ENCODE measurements at regions of chr2 and their contacts with region 1.

Region 1: GRCh38 chr2:121530212-121530705 is 421 bp upstream of the RNU4ATAC start:
- DNase-seq: peak; percentile 90
- ATAC-seq: peak; percentile 71
- H3K4me3 Mint-ChIP-seq: peak overlapping the region; percentile 97
- H3K27ac Mint-ChIP-seq: peak overlapping the region; percentile 99
- H3K4me1 Mint-ChIP-seq: peaks cover 58% of the 10 kb centered on the region
- H3K27me3 Mint-ChIP-seq: no peaks in the 10 kb centered on the region

Region 2: DNA sequence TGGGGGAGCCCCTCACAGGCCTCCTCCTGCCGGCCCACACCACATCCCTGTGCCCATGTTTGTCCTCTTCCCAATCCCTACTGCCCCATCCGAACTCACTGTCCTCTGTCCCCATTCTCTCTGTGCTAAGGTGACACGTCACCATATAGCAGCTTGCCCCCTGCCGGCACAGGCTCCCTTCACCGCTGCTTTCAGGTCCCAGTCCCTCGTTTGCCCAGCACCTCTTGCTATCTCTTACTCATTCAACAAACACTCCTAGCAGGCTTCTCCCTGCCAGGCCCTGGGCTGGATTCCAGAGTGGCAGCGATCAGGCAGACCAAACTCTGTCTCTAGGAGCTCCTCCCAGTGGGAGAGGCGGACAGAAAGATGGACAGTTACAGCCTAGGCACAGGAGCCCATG is 319.6 kb before region 1 on chr2:
- CTCF ChIA-PET with region 1: no interaction called
- POLR2A ChIA-PET with region 1: no interaction called
- DNase-seq: no peak
- ATAC-seq: no peak
- H3K4me3 Mint-ChIP-seq: no peak overlapping the region
- H3K27ac Mint-ChIP-seq: no peak overlapping the region
- H3K4me1 Mint-ChIP-seq: no peaks in the 10 kb centered on the region
- H3K27me3 Mint-ChIP-seq: no peaks in the 10 kb centered on the region

Region 3: GRCh38 chr2:121333834-121334558 is 196.3 kb before region 1 on chr2:
- CTCF ChIA-PET with region 1: no interaction called
- POLR2A ChIA-PET with region 1: no interaction called
- DNase-seq: no peak
- ATAC-seq: no peak
- H3K4me3 Mint-ChIP-seq: no peak overlapping the region
- H3K27ac Mint-ChIP-seq: no peak overlapping the region
- H3K4me1 Mint-ChIP-seq: no peaks in the 10 kb centered on the region
- H3K27me3 Mint-ChIP-seq: no peaks in the 10 kb centered on the region

Region 4: DNA sequence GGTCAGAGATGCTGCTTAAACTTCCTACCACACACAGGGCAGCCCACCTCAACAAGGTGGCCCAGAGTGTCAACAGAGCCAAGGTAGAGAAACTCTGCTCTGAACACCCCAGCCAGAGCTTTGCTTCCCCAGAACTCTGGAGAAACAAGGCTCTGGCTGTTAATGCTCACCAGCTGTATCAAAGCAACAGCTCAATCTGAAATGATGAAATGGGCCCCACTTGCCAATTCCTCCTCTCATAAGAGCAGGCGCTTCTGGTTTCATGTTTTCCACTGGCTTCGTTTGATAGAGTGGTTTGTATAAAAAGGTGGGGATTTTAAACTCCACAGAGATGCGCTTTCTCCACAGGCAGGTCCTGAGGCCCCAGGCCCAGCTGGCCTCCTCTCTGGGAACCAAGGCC is 184.4 kb before region 1 on chr2:
- CTCF ChIA-PET with region 1: no interaction called
- POLR2A ChIA-PET with region 1: no interaction called
- DNase-seq: no peak
- ATAC-seq: no peak
- H3K4me3 Mint-ChIP-seq: no peak overlapping the region
- H3K27ac Mint-ChIP-seq: no peak overlapping the region
- H3K4me1 Mint-ChIP-seq: no peaks in the 10 kb centered on the region
- H3K27me3 Mint-ChIP-seq: no peaks in the 10 kb centered on the region

Region 5: DNA sequence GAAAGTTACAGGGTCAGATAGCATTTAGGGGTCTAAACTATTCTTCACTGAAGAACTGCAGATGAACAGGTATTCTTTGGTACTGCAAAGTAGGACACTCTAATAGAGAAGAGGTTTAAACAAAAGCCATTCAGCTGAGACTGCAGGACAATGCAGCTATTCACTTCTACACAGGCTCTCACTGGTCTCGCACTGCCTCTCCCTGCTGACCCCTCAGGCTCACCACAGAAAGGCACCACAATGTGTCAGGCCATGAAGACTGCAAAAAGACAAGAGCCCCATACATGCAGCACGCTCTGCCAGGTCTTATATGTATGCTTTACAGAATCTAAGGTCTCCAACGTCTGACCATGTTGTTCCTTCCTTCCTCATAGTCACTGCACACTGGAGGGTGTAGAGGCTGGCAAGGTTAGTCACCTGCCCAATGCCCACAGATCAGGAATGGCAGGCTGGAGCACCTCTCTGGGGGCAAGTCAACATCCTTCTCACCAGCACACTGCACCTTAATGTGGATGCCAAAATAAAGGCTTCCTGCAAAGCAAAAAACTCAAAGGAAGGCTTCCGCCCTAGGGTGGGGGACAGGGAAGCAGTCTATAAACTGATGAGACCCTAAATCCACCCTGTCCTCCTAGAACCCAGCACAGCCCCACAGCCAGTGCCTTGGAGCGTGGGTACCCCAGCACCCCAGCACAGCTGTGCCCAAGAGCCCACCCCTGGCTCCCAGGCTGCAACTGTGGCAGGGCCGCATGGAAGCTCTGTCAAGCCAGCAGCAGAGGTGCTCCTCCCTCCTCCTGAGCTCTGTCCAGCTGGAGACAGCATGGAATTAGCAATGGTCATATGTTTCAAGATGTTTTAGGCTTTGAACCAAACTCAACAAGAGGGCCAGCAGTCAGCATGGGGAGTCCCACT is 10.3 kb before region 1 on chr2:
- CTCF ChIA-PET with region 1: interaction called, 7 read pairs
- POLR2A ChIA-PET with region 1: interaction called, 14 read pairs
- DNase-seq: no peak
- ATAC-seq: no peak
- H3K4me3 Mint-ChIP-seq: no peak overlapping the region
- H3K27ac Mint-ChIP-seq: no peak overlapping the region
- H3K4me1 Mint-ChIP-seq: peaks cover 12% of the 10 kb centered on the region
- H3K27me3 Mint-ChIP-seq: no peaks in the 10 kb centered on the region

Region 6: DNA sequence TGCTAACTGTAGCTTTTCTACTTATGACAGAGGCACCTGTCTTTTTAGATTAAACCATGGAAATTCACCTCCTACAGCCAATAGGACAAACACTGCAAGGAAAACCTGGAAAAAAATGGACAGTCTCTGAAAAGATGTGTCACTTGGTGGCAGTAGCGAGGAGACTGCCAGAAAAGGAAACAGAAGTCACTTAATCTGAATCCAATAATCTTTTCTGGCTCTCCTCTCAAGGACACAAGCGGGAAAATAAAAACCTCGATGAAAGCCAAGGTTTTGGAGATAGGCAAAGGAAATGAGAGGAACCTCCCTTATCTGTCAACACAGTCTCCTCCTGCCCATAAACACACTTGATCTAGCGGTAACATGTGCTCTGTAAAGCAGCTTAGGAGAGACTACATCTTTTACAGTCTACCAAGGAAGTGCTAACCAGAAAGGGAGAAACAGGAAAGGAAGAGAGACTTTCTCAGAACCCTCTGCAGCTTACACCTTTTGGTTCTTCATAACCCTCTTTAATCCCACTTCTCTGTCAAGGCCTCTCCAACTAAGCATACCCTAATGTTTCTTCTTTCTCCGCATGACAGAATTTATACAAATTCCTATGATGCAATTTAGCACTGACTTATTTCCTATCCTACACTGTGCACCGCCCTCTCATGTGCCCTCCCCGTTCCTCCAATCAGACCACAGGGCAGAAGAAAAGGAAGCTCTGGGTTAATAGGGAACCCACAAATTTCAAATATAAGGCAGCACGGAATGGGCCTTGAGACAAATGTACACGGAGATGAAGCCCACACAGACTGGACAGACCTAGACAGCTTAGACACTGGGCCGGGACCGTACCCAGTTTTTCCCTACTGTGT is 66.2 kb after region 1 on chr2:
- CTCF ChIA-PET with region 1: interaction called, 4 read pairs
- POLR2A ChIA-PET with region 1: interaction called, 15 read pairs
- DNase-seq: peak; percentile 48
- ATAC-seq: peak; percentile 84
- H3K4me3 Mint-ChIP-seq: peak overlapping the region; percentile 69
- H3K27ac Mint-ChIP-seq: peak overlapping the region; percentile 75
- H3K4me1 Mint-ChIP-seq: peaks cover 47% of the 10 kb centered on the region
- H3K27me3 Mint-ChIP-seq: no peaks in the 10 kb centered on the region

Region 7: GRCh38 chr2:121699421-121700333 is 169.4 kb after region 1 on chr2:
- CTCF ChIA-PET with region 1: interaction called, 7 read pairs
- POLR2A ChIA-PET with region 1: interaction called, 91 read pairs
- DNase-seq: peak; percentile 97
- ATAC-seq: peak; percentile 97
- H3K4me3 Mint-ChIP-seq: peak overlapping the region; percentile 81
- H3K27ac Mint-ChIP-seq: peak overlapping the region; percentile 98
- H3K4me1 Mint-ChIP-seq: peaks cover 52% of the 10 kb centered on the region
- H3K27me3 Mint-ChIP-seq: no peaks in the 10 kb centered on the region

Region 8: DNA sequence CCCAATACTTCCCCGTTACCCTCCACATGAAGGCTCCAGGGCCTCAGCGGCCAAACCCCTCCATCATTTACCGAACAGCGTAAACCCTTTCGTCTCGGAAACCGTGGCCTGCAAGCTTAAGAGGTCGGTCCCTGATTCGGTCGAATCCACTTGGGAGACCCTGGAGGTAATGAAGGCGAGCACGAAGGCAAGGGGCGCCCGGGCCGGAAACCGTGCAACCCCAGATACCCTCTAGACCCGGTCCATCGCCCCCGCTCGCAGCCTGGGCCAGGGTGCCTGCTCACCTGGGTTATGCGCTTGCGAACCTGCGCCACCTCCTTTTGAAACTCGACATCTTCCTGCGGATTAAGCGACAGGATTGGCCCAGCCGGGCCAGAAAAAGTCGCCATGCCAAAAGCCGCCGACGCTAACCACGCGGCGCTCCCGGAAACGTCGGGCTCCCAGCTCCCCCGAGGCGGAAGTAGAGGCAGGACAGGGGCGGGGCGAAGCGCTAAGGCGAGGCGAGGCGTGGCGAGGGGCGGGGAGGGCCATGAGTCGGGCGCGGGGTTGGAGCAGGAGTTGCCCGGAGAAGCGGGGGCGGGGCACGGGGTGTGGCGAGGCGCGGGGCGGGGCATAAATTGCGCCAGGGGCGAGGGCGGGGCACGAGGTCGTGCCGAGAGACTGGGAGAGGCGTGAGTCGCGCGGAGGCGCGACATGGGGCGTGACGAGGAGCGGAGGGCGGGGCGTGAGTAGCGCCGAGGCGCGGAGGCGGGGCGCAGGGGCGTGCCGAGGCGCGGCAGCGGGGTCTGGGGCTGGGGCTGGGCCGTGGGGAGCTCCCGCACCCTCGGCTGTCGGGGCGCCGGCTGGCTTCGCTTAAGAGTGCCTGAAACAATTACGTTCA is 206.4 kb after region 1 on chr2 and contains the start of gene NIFK:
- CTCF ChIA-PET with region 1: interaction called, 7 read pairs
- POLR2A ChIA-PET with region 1: interaction called, 41 read pairs
- DNase-seq: peak; percentile 100
- ATAC-seq: peak; percentile 92
- H3K4me3 Mint-ChIP-seq: peak within 1 kb of the TSS; percentile 98
- H3K27ac Mint-ChIP-seq: peak within 1 kb of the TSS; percentile 97
- H3K4me1 Mint-ChIP-seq: peaks cover 47% of the 10 kb centered on the region
- H3K27me3 Mint-ChIP-seq: peaks cover 3% of the 10 kb centered on the region
- total RNA-seq, gene NIFK: 79.8 to 80.1 TPM

Region 9: GRCh38 chr2:121839584-121839983 is 309.3 kb after region 1 on chr2:
- CTCF ChIA-PET with region 1: no interaction called
- POLR2A ChIA-PET with region 1: no interaction called
- DNase-seq: no peak
- ATAC-seq: no peak
- H3K4me3 Mint-ChIP-seq: no peak overlapping the region
- H3K27ac Mint-ChIP-seq: no peak overlapping the region
- H3K4me1 Mint-ChIP-seq: no peaks in the 10 kb centered on the region
- H3K27me3 Mint-ChIP-seq: peaks cover 9% of the 10 kb centered on the region